Gastrocnemius medialis (tissue), 4 donors: ENCODE measurements at regions of chr18 and their contacts with region 1.

Region 1: DNA sequence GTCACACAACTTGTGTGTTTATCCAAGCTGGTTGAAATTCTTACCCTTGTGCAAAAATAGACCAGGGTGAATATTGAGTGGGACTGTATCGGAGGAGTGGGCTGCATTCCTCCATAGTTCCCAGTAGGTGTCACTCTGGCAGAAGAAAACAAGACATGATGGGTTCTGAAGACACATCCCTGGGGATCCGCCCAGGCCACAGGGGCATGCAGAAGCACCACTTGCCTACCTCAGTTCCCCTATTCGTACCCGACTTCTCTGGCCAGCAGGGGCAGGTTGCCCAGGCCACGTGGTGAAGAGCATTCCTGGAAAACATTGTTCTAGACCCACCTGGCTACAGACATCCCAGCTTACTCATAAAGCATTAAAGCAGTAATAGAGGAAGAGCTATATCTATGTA is 168.2 kb downstream of the FAM210A start:
- DNase-seq: no peak
- ATAC-seq: peak; percentile 62 to 73
- H3K4me3 ChIP-seq: no peak overlapping the region
- H3K27ac ChIP-seq: no peak overlapping the region
- H3K4me1 ChIP-seq: peaks cover 12 to 18% of the 10 kb centered on the region in 2 donors
- H3K27me3 ChIP-seq: no peaks in the 10 kb centered on the region
- CTCF ChIP-seq: peak; percentile 45 to 67 (median 54)
- POLR2A ChIP-seq: no peak

Region 2: DNA sequence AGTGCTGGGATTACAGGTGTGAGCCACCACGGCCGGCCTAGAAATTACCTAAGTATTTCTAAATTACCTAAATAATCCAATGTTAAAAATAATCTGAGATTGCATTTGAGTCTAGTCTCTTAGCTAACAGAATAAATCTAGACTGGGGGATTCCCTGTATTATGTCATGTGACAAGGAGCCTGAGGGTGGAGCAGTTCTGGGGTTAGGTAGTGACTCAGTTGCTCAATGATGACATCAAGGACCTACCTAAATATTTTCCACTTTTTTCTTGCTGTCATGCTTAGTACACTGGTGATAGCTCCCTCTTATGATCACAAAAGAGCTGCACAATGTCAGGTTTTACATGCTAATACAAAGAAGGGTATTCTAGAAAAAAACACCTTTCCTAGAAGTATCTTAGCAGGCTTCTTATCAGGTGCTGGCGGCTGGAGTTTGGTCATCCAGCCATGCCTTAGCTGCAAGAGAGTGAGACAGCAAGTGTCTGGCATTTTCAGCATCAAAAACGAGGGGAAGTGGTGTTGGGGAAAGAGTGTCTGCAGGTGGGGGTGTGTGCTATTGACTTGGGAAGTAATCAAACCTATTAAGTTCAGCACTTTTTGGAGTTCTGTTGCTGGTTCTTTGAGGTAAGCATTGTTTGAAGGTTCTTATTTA is 584.4 kb before region 1 on chr18:
- in situ Hi-C with region 1: no loop called
- intact Hi-C with region 1: no loop called
- DNase-seq: no peak
- ATAC-seq: no peak
- H3K4me3 ChIP-seq: no peak overlapping the region
- H3K27ac ChIP-seq: no peak overlapping the region
- H3K4me1 ChIP-seq: no peaks in the 10 kb centered on the region
- H3K27me3 ChIP-seq: no peaks in the 10 kb centered on the region
- CTCF ChIP-seq: no peak
- POLR2A ChIP-seq: no peak

Region 3: GRCh38 chr18:13597068-13597467 is 38.9 kb after region 1 on chr18:
- in situ Hi-C with region 1: no loop called
- intact Hi-C with region 1: no loop called
- DNase-seq: no peak
- ATAC-seq: no peak
- H3K4me3 ChIP-seq: no peak overlapping the region
- H3K27ac ChIP-seq: no peak overlapping the region
- H3K4me1 ChIP-seq: peaks cover 0 to 3% of the 10 kb centered on the region in 2 donors
- H3K27me3 ChIP-seq: no peaks in the 10 kb centered on the region
- CTCF ChIP-seq: no peak
- POLR2A ChIP-seq: no peak

Region 4: GRCh38 chr18:13611601-13612195 is 53.6 kb after region 1 on chr18:
- in situ Hi-C with region 1: no loop called
- intact Hi-C with region 1: loop called (anchors 5 kb)
- DNase-seq: peak in 1 of 2 donors; percentile 25
- ATAC-seq: peak; percentile 42
- H3K4me3 ChIP-seq: peak overlapping the region; percentile 48 to 61 (median 58)
- H3K27ac ChIP-seq: peak overlapping the region; percentile 43 to 77 (median 68)
- H3K4me1 ChIP-seq: peaks cover 28 to 32% of the 10 kb centered on the region in 2 donors
- H3K27me3 ChIP-seq: no peaks in the 10 kb centered on the region
- CTCF ChIP-seq: no peak
- POLR2A ChIP-seq: no peak

Region 5: DNA sequence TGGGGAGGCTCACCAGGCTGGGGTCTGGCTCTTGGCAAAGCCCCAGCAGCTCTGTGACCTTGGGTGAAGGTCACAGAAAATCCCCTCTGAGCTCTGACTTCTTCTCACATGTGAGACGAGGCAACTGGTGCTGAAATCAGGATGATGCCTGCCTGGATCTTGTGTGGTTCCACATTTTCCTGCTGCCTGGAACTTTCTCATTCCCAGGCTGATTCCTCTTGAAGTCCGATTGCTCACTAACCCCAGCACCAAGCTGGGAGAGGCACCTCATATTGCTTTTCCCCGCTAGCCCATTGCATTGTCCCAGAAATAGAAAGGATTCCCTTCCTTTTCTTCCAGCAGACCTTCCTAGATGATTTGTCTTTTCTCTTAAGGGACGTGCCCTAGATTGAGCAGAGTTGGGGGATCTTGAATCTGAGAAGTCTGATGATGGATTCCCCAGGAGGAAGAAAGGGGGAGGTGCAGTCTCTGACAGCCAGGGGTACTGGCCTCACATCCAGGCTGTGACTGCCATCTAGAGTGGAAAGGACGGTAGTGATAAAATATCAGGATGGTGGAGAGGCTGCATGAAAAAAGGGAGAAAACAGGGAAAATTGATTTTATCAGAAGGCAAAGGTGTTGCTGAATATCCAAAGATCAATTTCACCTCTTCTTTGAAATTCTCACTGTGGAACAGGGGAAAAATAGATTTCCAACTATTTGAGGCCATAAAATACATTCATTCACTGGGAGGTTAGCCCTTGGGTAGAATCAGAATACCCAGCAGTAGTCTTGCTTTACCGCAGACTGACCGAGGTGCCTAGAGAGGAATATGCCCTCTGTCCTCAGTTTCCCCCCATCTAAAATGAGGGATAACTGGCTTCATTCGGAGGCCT is 72.0 kb after region 1 on chr18:
- in situ Hi-C with region 1: loop called in 1 of 4 experiments (anchors 5 kb)
- intact Hi-C with region 1: loop called (anchors 2 kb)
- DNase-seq: no peak
- ATAC-seq: peak; percentile 85 to 87
- H3K4me3 ChIP-seq: no peak overlapping the region
- H3K27ac ChIP-seq: no peak overlapping the region
- H3K4me1 ChIP-seq: peaks cover 4% of the 10 kb centered on the region in 2 donors
- H3K27me3 ChIP-seq: no peaks in the 10 kb centered on the region
- CTCF ChIP-seq: peak; percentile 54 to 79 (median 72)
- POLR2A ChIP-seq: no peak

Region 6: DNA sequence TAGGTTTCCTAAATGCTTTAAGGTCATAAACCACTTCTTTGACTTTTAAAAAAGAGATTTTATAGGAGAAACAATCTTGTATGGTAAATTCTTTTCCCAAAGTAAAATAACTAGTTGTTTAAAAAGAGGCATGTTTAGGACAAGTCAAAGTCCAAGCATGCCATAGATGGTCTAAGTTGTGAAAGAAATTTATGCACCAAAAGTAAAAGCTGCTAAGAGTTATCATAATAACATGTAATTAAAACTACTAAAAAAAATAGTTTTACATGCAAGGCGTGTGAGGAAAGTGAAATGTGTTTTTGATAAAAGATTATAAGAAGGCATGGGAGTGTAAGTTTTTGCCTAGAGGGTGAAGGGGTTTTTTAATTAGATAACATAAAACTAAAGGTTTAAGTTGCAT is 145.8 kb after region 1 on chr18:
- in situ Hi-C with region 1: loop called in 1 of 4 experiments (anchors 25 kb)
- intact Hi-C with region 1: no loop called
- DNase-seq: no peak
- ATAC-seq: no peak
- H3K4me3 ChIP-seq: no peak overlapping the region
- H3K27ac ChIP-seq: no peak overlapping the region
- H3K4me1 ChIP-seq: no peaks in the 10 kb centered on the region
- H3K27me3 ChIP-seq: no peaks in the 10 kb centered on the region
- CTCF ChIP-seq: no peak
- POLR2A ChIP-seq: no peak

Region 7: DNA sequence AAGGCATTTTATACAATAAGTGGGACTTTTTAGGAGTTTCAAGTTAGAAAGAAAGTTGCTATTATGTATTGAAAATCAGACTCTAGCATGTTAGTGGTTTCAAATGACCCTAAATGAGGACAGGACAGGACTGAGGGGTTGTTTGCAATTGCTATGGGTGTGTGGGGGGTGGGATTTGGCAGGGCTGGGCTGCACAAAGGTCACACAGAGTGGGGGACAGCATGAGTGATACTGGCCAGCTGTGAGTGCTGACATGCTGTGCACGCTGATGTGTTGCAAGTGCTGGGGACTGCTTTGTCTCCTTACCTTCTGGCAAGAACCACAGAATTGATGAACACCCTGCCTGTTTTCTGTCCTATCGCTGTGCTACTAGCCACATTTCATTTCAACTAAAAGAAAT is 198.1 kb after region 1 on chr18:
- in situ Hi-C with region 1: no loop called
- intact Hi-C with region 1: no loop called
- DNase-seq: no peak
- ATAC-seq: no peak
- H3K4me3 ChIP-seq: no peak overlapping the region
- H3K27ac ChIP-seq: no peak overlapping the region
- H3K4me1 ChIP-seq: peaks cover 0 to 15% of the 10 kb centered on the region in 2 donors
- H3K27me3 ChIP-seq: no peaks in the 10 kb centered on the region
- CTCF ChIP-seq: no peak
- POLR2A ChIP-seq: no peak

Region 8: GRCh38 chr18:13800505-13801259 is 242.6 kb after region 1 on chr18:
- in situ Hi-C with region 1: no loop called
- intact Hi-C with region 1: loop called (anchors 10 kb)
- DNase-seq: peak in 1 of 2 donors; percentile 15
- ATAC-seq: peak in 1 of 2 donors; percentile 39
- H3K4me3 ChIP-seq: peak overlapping the region in 3 of 4 donors; percentile 3 to 43 (median 27)
- H3K27ac ChIP-seq: no peak overlapping the region
- H3K4me1 ChIP-seq: no peaks in the 10 kb centered on the region
- H3K27me3 ChIP-seq: peaks cover 0 to 3% (median 0%) of the 10 kb centered on the region in 3 donors
- CTCF ChIP-seq: peak in 2 of 5 experiments; percentile 37 to 53
- POLR2A ChIP-seq: no peak